PC-3 (cell line): ENCODE measurements at regions of chr12 and their contacts with region 1.

Region 1: GRCh38 chr12:89775063-89775985 is 66.7 kb upstream of the ATP2B1 start:
- DNase-seq: peak; percentile 91
- ATAC-seq: peak; percentile 48
- H3K4me3 ChIP-seq: no peak overlapping the region
- H3K27ac ChIP-seq: peak overlapping the region; percentile 38
- H3K4me1 ChIP-seq: peaks cover 59% of the 10 kb centered on the region
- H3K27me3 ChIP-seq: no peaks in the 10 kb centered on the region
- CTCF ChIP-seq: no peak

Region 2: DNA sequence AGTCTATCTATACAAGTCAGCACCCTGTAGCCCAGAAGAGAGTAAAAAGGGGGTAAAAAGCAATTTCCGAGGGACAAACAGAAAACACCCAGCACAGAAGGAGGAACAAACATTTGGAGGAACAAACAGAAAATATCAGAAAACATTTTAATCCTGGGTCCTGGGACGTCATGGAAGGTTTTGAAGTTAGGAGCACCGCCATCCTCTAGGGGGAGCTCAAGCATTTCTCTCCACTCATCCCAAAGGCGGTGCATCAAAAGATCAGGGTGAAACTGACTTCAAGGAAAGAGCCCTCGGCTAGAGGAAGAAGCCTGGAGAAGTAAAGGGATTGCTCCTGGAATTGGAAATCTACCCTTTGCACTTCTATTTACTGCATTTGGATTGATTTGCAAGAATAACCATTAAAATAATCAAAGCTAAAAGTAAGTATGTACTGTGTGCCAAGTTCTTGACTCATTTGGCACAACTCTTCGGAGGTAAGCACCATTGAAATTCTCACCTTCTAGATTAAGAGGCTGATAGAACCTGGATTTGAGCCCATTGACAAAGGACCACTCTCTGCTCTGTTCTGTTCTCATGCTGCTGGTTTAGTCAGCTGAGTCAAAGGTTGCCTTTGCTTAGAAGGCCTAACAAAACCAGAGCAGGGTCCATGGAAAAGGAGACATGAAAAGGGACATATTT is 232.3 kb before region 1 on chr12:
- CTCF ChIA-PET with region 1: interaction called, 3 read pairs
- POLR2A ChIA-PET with region 1: no interaction called
- intact Hi-C with region 1: loop called (anchors 1 kb)
- DNase-seq: peak; percentile 91
- ATAC-seq: peak; percentile 94
- H3K4me3 ChIP-seq: no peak overlapping the region
- H3K27ac ChIP-seq: peak overlapping the region; percentile 7
- H3K4me1 ChIP-seq: peaks cover 6% of the 10 kb centered on the region
- H3K27me3 ChIP-seq: no peaks in the 10 kb centered on the region
- CTCF ChIP-seq: peak; percentile 96

Region 3: DNA sequence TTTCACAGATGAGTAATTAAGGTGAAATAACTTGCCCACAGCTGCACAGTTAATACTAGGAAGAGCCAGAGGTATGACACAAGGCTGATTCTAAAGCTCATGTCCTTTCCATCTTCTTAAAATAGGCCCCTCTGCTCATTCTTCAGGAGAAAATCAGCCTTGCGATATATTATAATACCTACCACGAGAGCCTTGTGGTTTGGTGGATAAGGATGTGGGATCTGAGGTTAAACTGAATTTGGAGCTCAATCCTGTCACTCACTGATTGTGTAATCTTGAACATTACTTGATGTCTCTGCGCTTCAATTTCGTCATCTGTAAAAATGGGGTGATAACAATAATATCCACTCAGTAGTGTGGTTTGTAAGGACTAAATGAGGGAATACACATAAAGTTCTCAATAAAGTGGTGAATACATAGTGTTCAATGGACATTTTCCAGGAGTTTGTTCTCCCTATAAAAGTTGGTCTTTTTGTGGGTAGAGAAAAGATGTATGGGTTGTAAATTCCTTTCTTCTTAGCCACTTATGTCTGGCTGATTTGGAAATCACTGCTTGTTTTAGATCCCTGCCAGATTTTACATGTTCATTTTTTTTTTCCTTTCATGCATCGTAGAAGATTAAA is 41.6 kb before region 1 on chr12:
- CTCF ChIA-PET with region 1: no interaction called
- POLR2A ChIA-PET with region 1: no interaction called
- intact Hi-C with region 1: loop called (anchors 1 kb)
- DNase-seq: peak; percentile 93
- ATAC-seq: peak; percentile 74
- H3K4me3 ChIP-seq: peak overlapping the region; percentile 0; the same call in 1 of the 2 replicates
- H3K27ac ChIP-seq: peak overlapping the region; percentile 89
- H3K4me1 ChIP-seq: peaks cover 38% of the 10 kb centered on the region
- H3K27me3 ChIP-seq: no peaks in the 10 kb centered on the region
- CTCF ChIP-seq: no peak

Region 4: GRCh38 chr12:89825591-89826449 is 50.5 kb after region 1 on chr12:
- CTCF ChIA-PET with region 1: no interaction called
- POLR2A ChIA-PET with region 1: no interaction called
- intact Hi-C with region 1: loop called (anchors 2 kb)
- DNase-seq: peak; percentile 90
- ATAC-seq: peak; percentile 86
- H3K4me3 ChIP-seq: peak overlapping the region; percentile 13; the same call in 1 of the 2 replicates
- H3K27ac ChIP-seq: peak overlapping the region; percentile 72
- H3K4me1 ChIP-seq: peaks cover 23% of the 10 kb centered on the region
- H3K27me3 ChIP-seq: no peaks in the 10 kb centered on the region
- CTCF ChIP-seq: no peak

Region 5: GRCh38 chr12:90253674-90254181 is 478.4 kb after region 1 on chr12:
- CTCF ChIA-PET with region 1: no interaction called
- POLR2A ChIA-PET with region 1: no interaction called
- intact Hi-C with region 1: loop called (anchors 5 kb)
- DNase-seq: peak; percentile 98
- ATAC-seq: peak; percentile 100
- H3K4me3 ChIP-seq: no peak overlapping the region
- H3K27ac ChIP-seq: peak overlapping the region; percentile 68
- H3K4me1 ChIP-seq: peaks cover 26% of the 10 kb centered on the region
- H3K27me3 ChIP-seq: no peaks in the 10 kb centered on the region
- CTCF ChIP-seq: peak; percentile 74